ENCODE measurements at regions of chr7 and their contacts with region 1.

Region 1: GRCh38 chr7:130831817-130832481 is 97.9 kb upstream of the KLF14 start:
- DNase-seq: peak in 4 of 14 experiments; percentile 9 to 71 (median 50)
- ATAC-seq: no peak
- H3K4me3 ChIP-seq: no peak overlapping the region
- H3K4me3 Mint-ChIP-seq: no peak overlapping the region
- H3K27ac ChIP-seq: no peak overlapping the region
- H3K27ac Mint-ChIP-seq: no peak overlapping the region
- H3K4me1 ChIP-seq: no peaks in the 10 kb centered on the region
- H3K4me1 Mint-ChIP-seq: no peaks in the 10 kb centered on the region
- H3K27me3 ChIP-seq: no peaks in the 10 kb centered on the region
- H3K27me3 Mint-ChIP-seq: peaks cover 22% of the 10 kb centered on the region
- CTCF ChIP-seq: peak; percentile 89

Region 2: GRCh38 chr7:130063036-130063435 is 768.9 kb before region 1 on chr7:
- CTCF ChIA-PET with region 1: no interaction called
- POLR2A ChIA-PET with region 1: no interaction called
- intact Hi-C with region 1: loop called (anchors 1 to 2 kb)
- DNase-seq: peak; percentile 45 to 76 (median 61)
- ATAC-seq: peak; percentile 59
- H3K4me3 ChIP-seq: no peak overlapping the region
- H3K4me3 Mint-ChIP-seq: no peak overlapping the region
- H3K27ac ChIP-seq: no peak overlapping the region
- H3K27ac Mint-ChIP-seq: no peak overlapping the region
- H3K4me1 ChIP-seq: no peaks in the 10 kb centered on the region
- H3K4me1 Mint-ChIP-seq: no peaks in the 10 kb centered on the region
- H3K27me3 ChIP-seq: peaks cover 0 to 2% of the 10 kb centered on the region in 2 experiments
- H3K27me3 Mint-ChIP-seq: peaks cover 16% of the 10 kb centered on the region
- CTCF ChIP-seq: peak; percentile 77

Measured in CD4-positive, alpha-beta T cell (primary cell).